Activated CD8-positive, alpha-beta memory T cell treated with anti-CD3 and anti-CD28 coated beads, Interleukin-2, amount 10 ng/mL, durations not matched to agents 7 days and 5 days (primary cell): ENCODE measurements at regions of chr20 and their contacts with region 1.

Region 1: DNA sequence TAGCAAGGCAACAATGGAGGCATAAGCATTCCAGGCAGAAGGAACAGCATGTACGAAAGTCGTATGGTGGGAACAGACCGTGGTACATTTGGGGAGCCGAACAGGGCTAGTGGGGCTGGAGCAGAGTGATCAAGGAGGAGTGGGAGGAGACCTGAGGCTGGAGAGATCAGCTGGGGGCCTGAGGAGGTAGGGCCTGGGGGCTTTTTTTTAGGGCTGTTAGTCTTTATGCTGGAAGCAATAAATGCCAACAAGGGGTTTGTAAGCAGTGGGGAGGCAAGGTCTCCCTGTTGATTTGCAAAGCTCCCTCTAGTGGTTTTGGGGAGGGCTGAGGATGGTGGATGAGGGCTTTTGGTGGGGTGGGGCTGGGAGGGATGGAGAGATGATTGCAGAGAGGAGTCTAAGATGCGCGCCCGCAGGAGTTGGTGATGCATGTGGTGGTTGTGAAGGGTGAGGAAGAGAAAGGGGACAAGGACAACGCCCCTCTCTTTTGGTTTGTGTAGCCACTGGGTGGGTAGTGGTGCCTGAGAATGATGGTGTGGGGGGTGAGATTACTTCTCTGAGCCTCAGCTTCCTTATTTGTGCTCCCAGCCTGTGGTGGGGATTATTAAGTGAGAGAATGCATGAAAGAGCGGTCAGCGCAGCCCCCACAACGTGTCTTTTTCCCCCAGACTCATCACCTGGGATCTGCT is 74.1 kb upstream of the TOX2 start:
- DNase-seq: peak; percentile 82
- ATAC-seq: peak; percentile 63
- H3K4me3 Mint-ChIP-seq: peak overlapping the region; percentile 31
- H3K27ac Mint-ChIP-seq: peak overlapping the region; percentile 66
- H3K4me1 Mint-ChIP-seq: peaks cover 58% of the 10 kb centered on the region
- H3K27me3 Mint-ChIP-seq: peaks cover 36% of the 10 kb centered on the region

Region 2: GRCh38 chr20:43642548-43642947 is 198.0 kb before region 1 on chr20:
- CTCF ChIA-PET with region 1: no interaction called
- DNase-seq: no peak
- ATAC-seq: no peak
- H3K4me3 Mint-ChIP-seq: no peak overlapping the region
- H3K27ac Mint-ChIP-seq: no peak overlapping the region
- H3K4me1 Mint-ChIP-seq: no peaks in the 10 kb centered on the region
- H3K27me3 Mint-ChIP-seq: no peaks in the 10 kb centered on the region

Region 3: DNA sequence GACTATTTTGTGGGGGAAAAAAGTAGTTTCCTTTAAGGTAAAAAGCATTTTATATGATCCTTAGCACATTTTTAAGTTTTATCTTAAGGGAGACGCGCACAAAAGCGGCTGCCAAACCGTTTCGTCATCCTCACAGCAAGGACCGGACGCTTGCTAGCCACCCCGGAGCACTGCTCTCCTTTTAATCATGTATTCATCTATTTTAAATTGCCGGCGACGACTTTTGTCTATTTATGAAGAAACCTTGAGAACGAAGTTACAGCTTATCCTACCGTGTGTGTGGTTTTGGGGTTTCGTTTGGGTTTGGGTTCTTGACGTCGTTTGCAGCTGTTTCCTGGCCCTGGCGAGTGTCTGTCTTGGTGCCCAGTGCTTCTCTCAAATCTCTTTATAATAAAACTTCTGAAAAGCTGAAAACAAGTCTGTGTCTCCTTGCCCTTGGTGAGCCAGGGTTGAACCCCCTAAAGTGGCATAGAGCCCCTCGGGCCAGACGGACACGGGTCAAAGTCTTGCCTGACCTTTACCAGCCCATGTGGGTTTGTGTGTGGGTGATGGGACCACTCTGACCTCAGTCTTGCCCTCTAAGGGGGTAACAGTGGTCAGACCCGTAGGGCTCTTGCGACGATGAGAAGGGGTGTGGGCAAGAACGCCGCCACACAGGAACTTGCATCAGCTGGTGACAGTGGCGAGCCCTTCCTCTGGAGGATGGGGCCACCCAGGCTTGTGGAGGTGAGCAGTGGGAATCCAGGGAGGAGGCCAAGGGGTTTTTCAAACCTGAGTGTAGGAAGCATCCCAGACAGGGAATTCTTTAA is 228.9 kb after region 1 on chr20:
- CTCF ChIA-PET with region 1: interaction called, 10 read pairs
- DNase-seq: peak; percentile 90
- ATAC-seq: peak; percentile 74
- H3K4me3 Mint-ChIP-seq: peak overlapping the region; percentile 56
- H3K27ac Mint-ChIP-seq: peak overlapping the region; percentile 91
- H3K4me1 Mint-ChIP-seq: peaks cover 37% of the 10 kb centered on the region
- H3K27me3 Mint-ChIP-seq: peaks cover 36% of the 10 kb centered on the region